MCF 10A (cell line): ENCODE measurements at regions of chr15 and their contacts with region 1.

Region 1: GRCh38 chr15:99565299-99566156 is at the start of gene MEF2A:
- DNase-seq: peak; percentile 90
- H3K4me3 Mint-ChIP-seq: peak within 1 kb of the TSS; percentile 98
- H3K27ac Mint-ChIP-seq: peak within 1 kb of the TSS; percentile 89
- H3K4me1 Mint-ChIP-seq: peaks cover 10% of the 10 kb centered on the region
- H3K27me3 Mint-ChIP-seq: no peaks in the 10 kb centered on the region
- CTCF ChIP-seq: no peak
- total RNA-seq, gene MEF2A: 52.9 and 55.2 TPM in 2 replicates

Region 2: GRCh38 chr15:99282121-99282520 is 283.4 kb before region 1 on chr15:
- CTCF ChIA-PET with region 1: interaction called, 3 read pairs
- POLR2A ChIA-PET with region 1: interaction called, 5 read pairs
- intact Hi-C with region 1: loop called (anchors 5 kb)
- DNase-seq: no peak
- H3K4me3 Mint-ChIP-seq: no peak overlapping the region
- H3K27ac Mint-ChIP-seq: no peak overlapping the region
- H3K4me1 Mint-ChIP-seq: no peaks in the 10 kb centered on the region
- H3K27me3 Mint-ChIP-seq: no peaks in the 10 kb centered on the region
- CTCF ChIP-seq: no peak

Region 3: GRCh38 chr15:99433034-99433756 is 132.3 kb before region 1 on chr15:
- CTCF ChIA-PET with region 1: no interaction called
- POLR2A ChIA-PET with region 1: interaction called, 12 read pairs
- intact Hi-C with region 1: loop called (anchors 5 kb)
- DNase-seq: peak; percentile 76
- H3K4me3 Mint-ChIP-seq: no peak overlapping the region
- H3K27ac Mint-ChIP-seq: peak overlapping the region; percentile 57
- H3K4me1 Mint-ChIP-seq: peaks cover 23% of the 10 kb centered on the region
- H3K27me3 Mint-ChIP-seq: no peaks in the 10 kb centered on the region
- CTCF ChIP-seq: no peak

Region 4: GRCh38 chr15:99476413-99477222 is 88.9 kb before region 1 on chr15:
- CTCF ChIA-PET with region 1: no interaction called
- POLR2A ChIA-PET with region 1: interaction called, 12 read pairs
- intact Hi-C with region 1: loop called (anchors 1 kb)
- DNase-seq: peak; percentile 97
- H3K4me3 Mint-ChIP-seq: peak overlapping the region; percentile 61
- H3K27ac Mint-ChIP-seq: peak overlapping the region; percentile 73
- H3K4me1 Mint-ChIP-seq: peaks cover 13% of the 10 kb centered on the region
- H3K27me3 Mint-ChIP-seq: no peaks in the 10 kb centered on the region
- CTCF ChIP-seq: no peak

Region 5: GRCh38 chr15:99635807-99636206 is 70.3 kb after region 1 on chr15:
- CTCF ChIA-PET with region 1: no interaction called
- POLR2A ChIA-PET with region 1: no interaction called
- intact Hi-C with region 1: no loop called
- DNase-seq: no peak
- H3K4me3 Mint-ChIP-seq: no peak overlapping the region
- H3K27ac Mint-ChIP-seq: no peak overlapping the region
- H3K4me1 Mint-ChIP-seq: peaks cover 14% of the 10 kb centered on the region
- H3K27me3 Mint-ChIP-seq: no peaks in the 10 kb centered on the region
- CTCF ChIP-seq: no peak

Region 6: DNA sequence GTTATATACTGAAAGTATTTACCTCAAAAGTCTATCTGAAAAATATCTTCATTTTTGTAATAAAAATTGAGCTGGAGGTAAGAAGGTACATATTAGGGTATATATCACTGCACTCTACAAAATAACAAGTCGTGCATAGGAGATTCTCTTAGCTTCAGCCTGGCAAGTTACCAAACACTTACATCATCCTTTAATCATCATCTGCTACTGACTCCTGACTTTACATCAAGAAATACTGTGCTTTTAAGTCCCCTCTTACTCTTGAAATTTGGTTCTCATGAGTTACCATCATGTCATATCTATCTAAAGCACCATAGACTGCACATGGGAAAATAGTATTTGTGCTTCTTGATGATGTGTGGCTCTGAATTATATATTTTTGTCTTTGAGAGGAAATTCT is 116.9 kb after region 1 on chr15:
- CTCF ChIA-PET with region 1: no interaction called
- POLR2A ChIA-PET with region 1: no interaction called
- intact Hi-C with region 1: loop called (anchors 5 kb)
- DNase-seq: peak; percentile 76
- H3K4me3 Mint-ChIP-seq: no peak overlapping the region
- H3K27ac Mint-ChIP-seq: no peak overlapping the region
- H3K4me1 Mint-ChIP-seq: peaks cover 8% of the 10 kb centered on the region
- H3K27me3 Mint-ChIP-seq: no peaks in the 10 kb centered on the region
- CTCF ChIP-seq: no peak

Region 7: DNA sequence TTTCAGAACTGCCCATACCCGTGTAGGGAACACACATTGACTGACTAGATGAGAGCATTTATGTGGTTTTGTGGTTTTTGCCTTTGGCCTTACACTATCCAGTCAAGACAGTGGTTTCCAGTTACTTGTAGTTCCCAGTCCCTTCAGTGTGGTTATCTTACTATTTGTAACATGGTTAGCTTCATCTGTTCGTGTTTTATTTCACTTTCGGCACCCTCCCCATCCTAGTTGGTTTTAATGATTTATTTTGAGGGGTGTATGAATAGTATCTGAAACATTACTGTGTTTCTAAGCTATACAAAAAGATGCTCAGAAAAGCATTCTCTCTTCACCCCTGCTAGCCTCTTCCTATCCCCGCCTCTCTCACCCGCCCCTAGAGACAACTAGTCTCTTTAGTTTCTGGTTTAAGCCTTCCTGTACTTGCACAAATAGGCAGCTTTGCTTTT is 153.6 kb after region 1 on chr15:
- CTCF ChIA-PET with region 1: no interaction called
- POLR2A ChIA-PET with region 1: no interaction called
- intact Hi-C with region 1: no loop called
- DNase-seq: no peak
- H3K4me3 Mint-ChIP-seq: no peak overlapping the region
- H3K27ac Mint-ChIP-seq: no peak overlapping the region
- H3K4me1 Mint-ChIP-seq: peaks cover 9% of the 10 kb centered on the region
- H3K27me3 Mint-ChIP-seq: no peaks in the 10 kb centered on the region
- CTCF ChIP-seq: no peak